ENCODE measurements at regions of chr4 and their contacts with region 1.

Region 1: DNA sequence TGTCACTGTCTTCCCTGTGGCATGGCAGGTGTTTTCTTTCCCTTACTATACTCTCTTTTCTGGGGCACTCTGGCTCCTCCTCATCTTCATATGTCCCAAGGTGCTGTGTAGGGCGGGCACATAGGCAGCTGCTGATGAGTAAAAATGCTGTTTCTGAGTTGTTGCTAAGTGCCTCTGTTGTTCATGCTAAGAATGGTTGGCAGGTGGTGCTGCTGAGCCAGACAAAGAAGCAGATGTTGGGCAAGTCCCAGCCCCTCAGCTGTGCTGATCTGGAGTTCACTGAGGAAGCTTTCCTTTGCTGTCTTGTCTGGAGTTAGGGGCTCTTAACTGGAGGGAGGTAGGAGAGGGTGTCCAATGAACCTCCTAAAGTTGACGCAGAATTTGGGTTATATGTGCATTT is 40.6 kb downstream of the HADH start:
- DNase-seq: peak; percentile 48 to 89 (median 76)
- ATAC-seq: peak; percentile 79 to 89
- H3K4me3 Mint-ChIP-seq: peak overlapping the region; percentile 38 to 92 (median 80)
- H3K27ac Mint-ChIP-seq: peak overlapping the region; percentile 93 to 99 (median 96)
- H3K4me1 Mint-ChIP-seq: peaks cover 30 to 69% (median 61%) of the 10 kb centered on the region in 4 donors
- H3K27me3 Mint-ChIP-seq: no peaks in the 10 kb centered on the region

Region 2: GRCh38 chr4:107996949-107997788 is 33.2 kb before region 1 on chr4:
- POLR2A ChIA-PET with region 1: no interaction called
- DNase-seq: no peak
- ATAC-seq: no peak
- H3K4me3 Mint-ChIP-seq: no peak overlapping the region
- H3K27ac Mint-ChIP-seq: peak overlapping the region in 2 of 10 donors; percentile 17 to 63
- H3K4me1 Mint-ChIP-seq: peaks cover 33 to 78% (median 49%) of the 10 kb centered on the region in 4 donors
- H3K27me3 Mint-ChIP-seq: no peaks in the 10 kb centered on the region

Region 3: DNA sequence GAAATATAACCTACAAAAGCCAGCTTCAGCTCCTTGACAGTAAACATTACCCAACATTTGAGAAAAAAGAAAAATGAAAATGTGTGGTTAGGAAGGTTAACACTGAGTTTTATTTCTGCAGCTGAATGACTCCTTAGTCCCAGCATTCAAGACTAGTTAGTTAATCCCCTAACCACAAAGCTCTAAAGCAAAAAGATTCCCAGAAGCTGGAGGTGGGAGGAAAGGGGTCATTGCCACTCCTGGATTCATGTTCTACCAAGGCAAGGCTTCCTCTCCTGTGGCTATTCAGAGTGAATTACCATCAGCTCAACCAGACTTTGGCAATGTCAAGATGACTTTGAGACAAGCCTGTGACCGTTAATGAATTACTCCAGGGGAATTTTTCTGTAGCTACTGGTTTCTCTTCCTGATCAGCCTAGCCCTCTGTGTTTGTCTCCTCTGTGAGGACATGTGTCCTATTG is 22.9 kb after region 1 on chr4:
- POLR2A ChIA-PET with region 1: interaction called, 16 read pairs
- DNase-seq: no peak
- ATAC-seq: no peak
- H3K4me3 Mint-ChIP-seq: peak overlapping the region; percentile 5 to 89 (median 58)
- H3K27ac Mint-ChIP-seq: peak overlapping the region; percentile 93 to 99 (median 98)
- H3K4me1 Mint-ChIP-seq: peaks cover 57 to 97% (median 92%) of the 10 kb centered on the region in 4 donors
- H3K27me3 Mint-ChIP-seq: no peaks in the 10 kb centered on the region

Region 4: DNA sequence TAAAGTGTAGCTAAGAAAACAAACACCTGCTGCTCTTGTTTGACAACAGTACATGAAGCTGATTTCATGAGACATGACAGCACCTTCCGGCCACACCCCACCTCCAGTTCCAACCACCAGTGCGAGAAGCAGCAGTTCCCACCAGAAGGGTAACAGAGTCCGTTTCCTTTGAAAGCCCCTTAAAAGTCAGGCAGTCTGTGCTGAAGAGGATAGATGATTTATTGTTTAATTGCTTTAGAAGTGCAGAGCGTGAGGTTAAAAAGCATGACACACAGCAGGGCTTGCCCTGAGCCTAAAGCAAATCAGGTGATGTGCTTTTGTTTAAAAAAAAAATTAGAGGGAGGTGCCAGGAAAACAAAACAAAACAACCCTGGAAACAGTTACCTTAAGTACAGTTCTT is 42.0 kb after region 1 on chr4:
- POLR2A ChIA-PET with region 1: interaction called, 11 read pairs
- DNase-seq: peak; percentile 63 to 93 (median 86)
- ATAC-seq: peak; percentile 84 to 90
- H3K4me3 Mint-ChIP-seq: peak overlapping the region; percentile 51 to 83 (median 72)
- H3K27ac Mint-ChIP-seq: peak overlapping the region; percentile 87 to 99 (median 97)
- H3K4me1 Mint-ChIP-seq: peaks cover 37 to 86% (median 78%) of the 10 kb centered on the region in 4 donors
- H3K27me3 Mint-ChIP-seq: no peaks in the 10 kb centered on the region

Region 5: DNA sequence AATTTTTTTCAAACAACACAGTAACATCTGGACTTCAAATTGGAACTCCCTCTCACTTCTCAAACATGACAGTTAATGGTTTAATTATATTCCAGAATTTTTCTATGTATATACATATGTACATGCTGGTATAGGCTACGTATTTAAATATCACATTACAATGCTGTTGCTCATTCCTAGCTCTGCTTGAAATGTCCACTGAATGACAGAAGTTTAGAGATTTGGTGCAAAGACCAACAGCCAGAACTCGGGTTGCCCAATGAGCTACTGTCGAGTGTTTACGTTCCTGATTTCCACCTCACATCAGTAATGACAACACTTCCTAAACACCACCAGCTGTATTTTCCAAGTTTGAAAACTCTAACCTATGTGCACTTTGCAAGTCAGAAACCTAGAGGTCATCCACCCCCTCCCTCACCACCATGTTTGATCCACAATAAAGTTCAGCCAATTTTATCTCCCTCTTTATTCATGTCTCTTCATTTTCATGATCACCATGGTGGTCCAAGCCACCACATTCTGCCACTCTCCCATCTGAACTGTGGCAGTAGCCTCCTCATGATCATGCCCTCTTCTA is 540.7 kb after region 1 on chr4:
- POLR2A ChIA-PET with region 1: interaction called, 19 read pairs
- DNase-seq: no peak
- ATAC-seq: no peak
- H3K4me3 Mint-ChIP-seq: peak overlapping the region in 1 of 10 donors; percentile 46
- H3K27ac Mint-ChIP-seq: peak overlapping the region in 6 of 10 donors; percentile 21 to 80 (median 51)
- H3K4me1 Mint-ChIP-seq: peaks cover 17 to 40% (median 30%) of the 10 kb centered on the region in 4 donors
- H3K27me3 Mint-ChIP-seq: no peaks in the 10 kb centered on the region